Activated T-helper 1 cell treated with anti-CD3 and anti-CD28 coated beads, Interleukin-12 subunit alpha, Interleukin-12 subunit beta, Interleukin-2, Interleukin-4 antibody, amounts not matched to agents 30 ng/mL and 10 ng/mL and 1 ng/mL, durations not matched to agents 14 hours and 24 hours and 36 hours (primary cell): ENCODE measurements at regions of chr1 and their contacts with region 1.

Region 1: DNA sequence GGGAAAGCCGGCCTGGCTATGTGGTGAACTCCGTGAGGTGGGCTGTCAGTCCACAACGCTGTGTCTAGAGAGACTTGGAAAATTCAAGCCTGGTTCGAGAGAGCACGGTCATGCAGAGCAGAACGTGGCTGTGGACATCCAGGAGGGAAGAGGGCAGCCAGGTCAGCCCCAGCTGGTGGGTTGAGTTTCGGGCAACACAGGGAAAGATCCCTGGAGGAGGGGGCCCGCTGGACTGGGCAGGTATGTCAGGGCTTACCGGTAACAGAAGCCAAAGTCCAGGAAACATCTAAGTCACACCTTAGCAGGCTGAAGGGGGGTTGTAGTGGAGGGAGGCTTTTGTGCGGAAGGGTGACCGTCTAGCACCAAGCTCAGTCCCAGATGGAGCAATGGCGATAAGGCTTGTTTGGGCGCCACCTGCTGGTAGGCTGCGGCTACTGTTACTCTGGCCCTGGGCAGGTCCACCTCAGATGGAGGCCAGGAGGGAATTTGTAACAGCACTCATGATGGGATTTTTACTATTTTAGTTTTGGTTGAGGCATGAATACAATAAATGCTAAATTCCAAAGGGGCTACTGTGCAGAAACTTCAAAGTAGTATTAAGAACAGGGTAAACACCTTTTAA is 143.3 kb upstream of the ZNF644 start:
- DNase-seq: peak; percentile 44
- H3K4me3 Mint-ChIP-seq: no peak overlapping the region
- H3K27ac Mint-ChIP-seq: no peak overlapping the region
- H3K4me1 Mint-ChIP-seq: no peaks in the 10 kb centered on the region
- H3K27me3 Mint-ChIP-seq: no peaks in the 10 kb centered on the region

Region 2: DNA sequence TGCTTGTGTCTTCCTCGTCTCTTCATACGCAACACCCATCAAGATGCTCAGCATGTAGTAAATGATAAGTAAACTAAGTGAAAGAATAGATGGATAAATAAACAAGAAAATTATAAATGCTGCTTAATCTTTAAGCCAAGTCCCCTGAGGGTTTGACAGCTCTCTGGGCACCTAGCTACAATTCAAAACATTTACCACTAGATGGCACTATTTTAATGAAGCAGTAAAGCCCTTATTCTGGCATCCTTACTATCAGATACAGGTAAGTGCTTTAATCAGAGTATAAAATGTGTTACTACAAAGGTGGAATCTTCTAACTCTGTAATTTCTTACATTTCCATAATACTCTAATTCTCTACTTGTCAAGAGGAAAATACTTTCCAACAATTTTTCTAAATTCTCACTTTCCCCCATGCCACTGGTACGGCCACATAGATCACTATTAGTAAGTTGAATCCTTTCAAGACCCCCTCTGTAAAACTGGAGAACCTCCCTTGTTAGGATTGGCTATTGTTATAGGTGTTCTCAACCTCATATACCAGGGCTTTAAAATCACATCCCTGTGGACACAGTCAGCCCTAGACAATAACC is 585.8 kb before region 1 on chr1:
- intact Hi-C with region 1: loop called (anchors 1 kb)
- DNase-seq: no peak
- H3K4me3 Mint-ChIP-seq: no peak overlapping the region
- H3K27ac Mint-ChIP-seq: no peak overlapping the region
- H3K4me1 Mint-ChIP-seq: no peaks in the 10 kb centered on the region
- H3K27me3 Mint-ChIP-seq: peaks cover 5% of the 10 kb centered on the region

Region 3: GRCh38 chr1:90850898-90851710 is 314.0 kb before region 1 on chr1:
- intact Hi-C with region 1: loop called (anchors 5 kb)
- DNase-seq: peak; percentile 67
- H3K4me3 Mint-ChIP-seq: peak overlapping the region; percentile 79
- H3K27ac Mint-ChIP-seq: no peak overlapping the region
- H3K4me1 Mint-ChIP-seq: peaks cover 17% of the 10 kb centered on the region
- H3K27me3 Mint-ChIP-seq: peaks cover 60% of the 10 kb centered on the region

Region 4: GRCh38 chr1:91021686-91022517 is 143.2 kb before region 1 on chr1 and contains the start of gene ZNF644:
- intact Hi-C with region 1: loop called (anchors 1 kb)
- DNase-seq: peak; percentile 87
- H3K4me3 Mint-ChIP-seq: peak within 1 kb of the TSS; percentile 92
- H3K27ac Mint-ChIP-seq: peak within 1 kb of the TSS; percentile 99
- H3K4me1 Mint-ChIP-seq: peaks cover 48% of the 10 kb centered on the region
- H3K27me3 Mint-ChIP-seq: peaks cover 2% of the 10 kb centered on the region
- total RNA-seq, gene ZNF644: 60.4 and 68.7 TPM in 2 replicates

Region 5: DNA sequence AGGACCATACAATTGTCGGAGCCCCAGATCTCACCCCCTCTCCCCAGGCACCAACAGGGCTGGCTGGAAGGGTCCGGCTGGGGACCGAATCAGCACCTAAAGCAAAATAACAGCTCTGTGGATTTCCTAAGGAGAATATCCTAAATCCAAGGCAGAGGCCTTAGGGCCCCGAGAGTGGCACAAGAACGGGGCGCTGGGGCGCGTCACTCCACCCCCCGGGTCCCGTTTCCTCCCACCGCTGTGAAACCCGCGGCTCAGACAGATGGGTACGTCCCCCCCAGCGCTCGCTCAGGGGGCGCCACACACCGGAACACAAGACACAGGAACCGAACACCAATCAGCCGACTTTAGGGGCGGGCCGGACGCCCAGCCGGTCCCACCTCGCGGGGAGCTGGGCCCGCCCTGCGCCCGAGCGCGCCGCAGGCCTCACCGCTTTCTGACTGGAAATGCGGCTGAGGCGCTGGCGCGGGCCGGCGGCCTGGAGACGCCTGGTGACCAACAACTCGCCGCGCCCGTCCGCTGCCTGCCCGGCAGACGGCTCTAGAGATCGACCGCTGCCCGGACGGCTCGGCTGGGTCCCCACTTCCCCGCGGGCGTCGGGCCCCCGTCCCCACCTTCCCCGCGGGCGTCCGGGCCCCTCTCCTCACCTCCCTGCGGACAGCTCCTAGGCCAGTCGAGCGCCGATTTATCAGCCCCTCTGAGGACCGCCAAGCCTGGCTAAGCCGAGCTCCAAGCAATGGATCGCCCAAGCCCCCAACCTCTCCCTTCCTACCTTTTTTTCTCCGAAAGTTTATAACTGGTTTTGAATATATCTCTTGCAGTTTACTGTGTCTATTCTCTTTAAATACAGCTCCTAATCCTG is 239.2 kb after region 1 on chr1 and contains the start of gene HFM1:
- intact Hi-C with region 1: loop called (anchors 5 kb)
- DNase-seq: peak; percentile 31
- H3K4me3 Mint-ChIP-seq: peak within 1 kb of the TSS; percentile 77
- H3K27ac Mint-ChIP-seq: peak within 1 kb of the TSS; percentile 23
- H3K4me1 Mint-ChIP-seq: peaks cover 5% of the 10 kb centered on the region
- H3K27me3 Mint-ChIP-seq: peaks cover 67% of the 10 kb centered on the region
- total RNA-seq, gene HFM1: not detected in 2 replicates